Prostate gland (tissue), 2 donors: ENCODE measurements at regions of chr17 and their contacts with region 1.

Region 1: GRCh38 chr17:50904521-50905459 is 38.6 kb upstream of the TOB1 start:
- DNase-seq: peak; percentile 91
- H3K4me3 ChIP-seq: no peak overlapping the region
- H3K27ac ChIP-seq: peak overlapping the region; percentile 95 to 97
- H3K4me1 ChIP-seq: peaks cover 36% of the 10 kb centered on the region
- H3K27me3 ChIP-seq: no peaks in the 10 kb centered on the region
- CTCF ChIP-seq: peak in 2 of 4 experiments; percentile 12 to 43
- POLR2A ChIP-seq: no peak

Region 2: GRCh38 chr17:50865984-50866774 is 38.6 kb before region 1 on chr17 and contains the start of gene TOB1:
- intact Hi-C with region 1: loop called (anchors 1 kb)
- DNase-seq: peak; percentile 98
- H3K4me3 ChIP-seq: peak within 1 kb of the TSS; percentile 79 to 98
- H3K27ac ChIP-seq: peak within 1 kb of the TSS; percentile 100
- H3K4me1 ChIP-seq: no peaks in the 10 kb centered on the region
- H3K27me3 ChIP-seq: no peaks in the 10 kb centered on the region
- CTCF ChIP-seq: no peak
- POLR2A ChIP-seq: peak; percentile 99
- total RNA-seq, gene TOB1: 37.1 to 64.7 TPM

Region 3: DNA sequence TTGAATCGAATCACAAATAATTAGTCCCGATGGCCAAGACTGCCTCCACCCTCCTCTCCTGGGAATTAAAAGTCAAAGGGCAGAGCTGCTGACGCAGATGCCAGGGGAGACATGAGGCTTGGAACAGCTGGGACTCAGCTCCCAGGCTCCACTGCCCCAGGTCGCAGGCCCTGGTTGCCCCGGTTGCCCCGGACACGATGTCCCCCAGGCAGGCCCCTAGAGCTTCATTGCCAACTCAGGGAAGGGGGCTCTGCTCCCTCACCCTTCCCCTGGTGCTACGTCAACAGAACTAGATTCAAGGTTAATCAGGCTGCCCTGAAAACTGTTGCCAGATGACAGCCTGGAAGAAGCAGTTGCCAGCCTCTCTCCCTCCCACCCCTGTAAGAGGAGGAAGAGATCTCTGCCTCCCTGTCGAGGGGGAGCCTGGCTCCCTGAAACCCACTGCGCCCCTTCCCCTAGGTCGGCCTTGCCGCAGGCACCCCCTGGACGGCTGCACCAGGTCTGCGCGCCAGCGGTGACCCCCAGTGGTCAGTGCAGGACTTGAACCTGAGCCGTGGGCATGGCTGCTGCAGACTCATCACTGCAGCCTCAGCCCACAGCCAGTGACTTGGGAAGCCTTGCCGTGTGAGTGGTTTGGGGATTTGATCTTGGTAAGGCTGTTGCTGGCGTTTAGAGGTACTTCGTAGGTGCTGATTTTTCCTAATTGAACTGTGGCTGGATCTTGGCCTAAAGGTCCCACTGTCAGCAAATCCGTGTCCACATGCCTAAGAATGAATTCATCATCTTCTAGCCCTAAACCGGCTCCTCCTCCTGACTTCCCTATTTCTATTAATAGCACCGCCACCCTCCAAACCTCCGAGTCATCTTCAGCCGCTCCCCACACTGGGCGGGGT is 45.4 kb after region 1 on chr17:
- intact Hi-C with region 1: no loop called
- DNase-seq: peak; percentile 67
- H3K4me3 ChIP-seq: no peak overlapping the region
- H3K27ac ChIP-seq: peak overlapping the region; percentile 77 to 82
- H3K4me1 ChIP-seq: peaks cover 20% of the 10 kb centered on the region
- H3K27me3 ChIP-seq: no peaks in the 10 kb centered on the region
- CTCF ChIP-seq: peak; percentile 35 to 91 (median 83)
- POLR2A ChIP-seq: peak; percentile 32

Region 4: DNA sequence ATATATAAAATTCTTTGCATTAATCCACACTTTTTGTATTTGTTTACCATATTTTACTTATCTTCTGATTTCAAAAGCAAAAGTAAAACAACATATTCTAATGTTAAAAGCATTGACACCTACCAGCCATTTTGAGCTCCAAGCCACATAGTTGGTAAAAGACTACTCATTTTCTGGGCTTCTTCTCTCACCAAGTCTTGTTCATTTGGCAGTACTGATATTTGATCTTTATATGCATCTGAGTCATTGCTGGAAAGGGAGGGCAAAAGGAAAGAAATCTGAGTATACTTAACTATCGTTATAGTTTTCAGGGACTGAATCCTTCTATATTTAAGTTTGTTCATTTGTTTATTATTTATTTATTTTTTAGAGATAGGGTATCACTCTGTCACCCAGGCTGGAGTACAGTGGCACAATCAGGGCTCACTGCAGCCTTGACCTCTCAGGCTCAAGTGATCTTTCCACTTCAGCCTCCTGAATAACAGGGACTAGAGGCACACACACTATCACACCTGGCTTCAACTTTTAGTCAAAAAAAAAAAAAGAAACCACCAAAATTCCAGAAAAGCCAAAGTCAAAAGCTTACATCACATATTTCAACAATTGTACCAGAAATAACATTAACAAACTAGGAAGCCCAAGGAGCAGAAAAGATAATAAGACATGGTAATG is 82.3 kb after region 1 on chr17:
- intact Hi-C with region 1: no loop called
- DNase-seq: no peak
- H3K4me3 ChIP-seq: no peak overlapping the region
- H3K27ac ChIP-seq: no peak overlapping the region
- H3K4me1 ChIP-seq: no peaks in the 10 kb centered on the region
- H3K27me3 ChIP-seq: no peaks in the 10 kb centered on the region
- CTCF ChIP-seq: no peak
- POLR2A ChIP-seq: no peak